Endothelial cell of umbilical vein (primary cell): ENCODE measurements at regions of chr7 and their contacts with region 1.

Region 1: DNA sequence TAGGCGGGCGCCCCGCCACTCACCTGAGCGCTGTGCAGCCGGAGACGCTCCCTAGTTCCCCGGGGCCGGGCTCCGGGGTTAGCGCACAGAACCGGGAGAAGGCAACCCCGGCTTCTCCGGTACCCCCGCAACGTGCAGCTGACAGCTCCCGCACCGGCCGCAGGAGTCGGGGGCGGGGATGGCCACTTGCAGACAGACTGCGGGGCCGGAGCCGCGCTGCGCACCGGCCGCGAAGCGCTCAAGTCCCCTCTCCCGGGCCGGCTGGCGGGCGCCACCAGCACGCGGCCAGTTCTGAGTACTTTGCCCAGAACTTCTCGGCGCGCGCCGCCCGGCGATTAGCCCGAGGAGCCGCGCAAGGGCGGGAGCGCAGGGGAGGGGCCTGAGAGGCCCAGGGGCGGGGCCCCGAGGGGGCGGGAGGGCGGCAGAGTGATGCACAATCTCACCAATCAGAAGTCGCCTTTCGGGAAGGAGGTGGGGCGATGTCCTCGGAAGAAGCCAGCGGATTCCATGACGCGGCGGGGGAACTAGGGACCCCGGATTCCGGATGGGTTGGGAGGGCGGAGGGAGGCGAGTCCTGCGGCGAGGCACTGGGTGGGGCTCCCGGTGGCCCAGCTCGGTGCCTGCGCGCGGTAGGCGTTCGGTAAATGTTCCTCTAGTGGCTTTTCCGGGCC is at the start of gene OSBPL3:
- DNase-seq: peak; percentile 95
- H3K4me3 ChIP-seq: peak within 1 kb of the TSS; percentile 71 to 82 (median 75)
- H3K27ac ChIP-seq: peak within 1 kb of the TSS; percentile 65
- H3K4me1 ChIP-seq: peaks cover 38% of the 10 kb centered on the region
- H3K27me3 ChIP-seq: no peaks in the 10 kb centered on the region
- CTCF ChIP-seq: no peak
- POLR2A ChIP-seq: peak; percentile 58
- total RNA-seq, gene OSBPL3: 27.1 and 31.3 TPM in 2 replicates

Region 2: GRCh38 chr7:24819916-24820689 is 159.9 kb before region 1 on chr7:
- CTCF ChIA-PET with region 1: interaction called, 105 read pairs
- POLR2A ChIA-PET with region 1: no interaction called
- dilution Hi-C with region 1: no loop called
- intact Hi-C with region 1: loop called (anchors 1 kb)
- DNase-seq: peak; percentile 85
- H3K4me3 ChIP-seq: no peak overlapping the region
- H3K27ac ChIP-seq: peak overlapping the region; percentile 86
- H3K4me1 ChIP-seq: peaks cover 15% of the 10 kb centered on the region
- H3K27me3 ChIP-seq: no peaks in the 10 kb centered on the region
- CTCF ChIP-seq: peak; percentile 80 to 83
- POLR2A ChIP-seq: no peak

Region 3: GRCh38 chr7:24842449-24843241 is 137.4 kb before region 1 on chr7:
- CTCF ChIA-PET with region 1: interaction called, 10 read pairs
- POLR2A ChIA-PET with region 1: no interaction called
- dilution Hi-C with region 1: no loop called
- intact Hi-C with region 1: loop called (anchors 5 kb)
- DNase-seq: peak; percentile 85
- H3K4me3 ChIP-seq: peak overlapping the region in 1 of 3 experiments; percentile 24
- H3K27ac ChIP-seq: peak overlapping the region; percentile 89
- H3K4me1 ChIP-seq: peaks cover 32% of the 10 kb centered on the region
- H3K27me3 ChIP-seq: no peaks in the 10 kb centered on the region
- CTCF ChIP-seq: no peak
- POLR2A ChIP-seq: no peak

Region 4: GRCh38 chr7:24882989-24883621 is 96.9 kb before region 1 on chr7:
- CTCF ChIA-PET with region 1: interaction called, 32 read pairs
- POLR2A ChIA-PET with region 1: no interaction called
- dilution Hi-C with region 1: no loop called
- intact Hi-C with region 1: loop called (anchors 2 kb)
- DNase-seq: peak; percentile 67
- H3K4me3 ChIP-seq: no peak overlapping the region
- H3K27ac ChIP-seq: peak overlapping the region; percentile 23
- H3K4me1 ChIP-seq: peaks cover 47% of the 10 kb centered on the region
- H3K27me3 ChIP-seq: no peaks in the 10 kb centered on the region
- CTCF ChIP-seq: no peak
- POLR2A ChIP-seq: no peak

Region 5: DNA sequence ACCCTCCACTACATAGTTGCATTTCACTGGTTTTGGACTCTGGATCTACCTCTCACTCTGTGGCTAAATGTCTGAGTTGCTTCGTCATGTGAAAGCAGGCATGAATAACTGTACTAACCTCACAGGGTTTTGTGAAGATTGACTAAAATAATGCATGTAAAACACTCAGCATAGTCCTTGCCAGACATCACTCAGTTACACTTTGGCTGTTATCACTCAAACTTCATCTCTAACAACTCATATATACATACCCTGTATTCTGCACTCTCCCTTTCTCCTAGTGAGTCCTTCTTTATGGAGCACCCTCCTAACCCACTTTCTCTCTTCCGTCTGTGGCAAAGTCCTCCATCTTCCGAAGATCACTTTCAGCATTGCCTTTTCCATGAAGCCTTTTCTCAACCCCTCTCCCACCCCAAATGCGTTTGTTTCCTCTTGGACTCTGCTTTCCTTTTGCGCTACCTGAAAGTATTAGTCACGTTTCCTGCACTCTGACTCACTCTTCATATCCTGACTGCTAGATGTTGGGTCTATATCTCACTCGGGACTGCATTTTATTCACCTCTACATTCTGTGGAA is 72.6 kb before region 1 on chr7:
- CTCF ChIA-PET with region 1: interaction called, 20 read pairs
- POLR2A ChIA-PET with region 1: no interaction called
- dilution Hi-C with region 1: no loop called
- intact Hi-C with region 1: loop called (anchors 1 kb)
- DNase-seq: peak; percentile 89
- H3K4me3 ChIP-seq: peak overlapping the region in 1 of 3 experiments; percentile 28
- H3K27ac ChIP-seq: peak overlapping the region; percentile 90
- H3K4me1 ChIP-seq: peaks cover 61% of the 10 kb centered on the region
- H3K27me3 ChIP-seq: no peaks in the 10 kb centered on the region
- CTCF ChIP-seq: no peak
- POLR2A ChIP-seq: no peak

Region 6: DNA sequence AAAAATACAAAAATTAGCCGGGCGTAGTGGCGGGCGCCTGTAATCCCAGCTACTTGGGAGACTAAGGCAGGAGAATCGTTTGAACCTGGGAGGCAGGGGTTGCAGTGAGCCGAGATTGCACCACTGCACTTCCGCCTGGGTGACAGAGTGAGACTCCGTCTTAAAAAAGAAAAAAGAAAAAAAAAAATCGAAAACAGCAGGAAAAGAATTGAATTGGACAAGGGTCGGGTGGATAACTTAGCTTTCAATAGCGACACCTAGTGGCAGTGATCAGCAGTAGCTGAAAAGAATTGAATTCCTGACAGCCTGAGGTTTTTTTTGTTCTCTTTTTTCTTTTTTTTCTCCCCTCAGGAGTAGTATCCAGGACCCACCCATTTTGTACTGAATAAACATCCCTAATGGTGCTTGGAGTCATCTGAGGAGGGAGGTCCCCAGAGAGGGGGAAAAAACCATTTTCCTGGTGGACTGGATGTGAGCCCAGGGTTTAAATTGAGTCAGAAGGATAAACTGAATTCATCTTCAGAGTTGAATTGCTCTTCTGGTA is 90.0 kb after region 1 on chr7:
- CTCF ChIA-PET with region 1: interaction called, 53 read pairs
- POLR2A ChIA-PET with region 1: interaction called, 3 read pairs
- dilution Hi-C with region 1: no loop called
- intact Hi-C with region 1: loop called (anchors 1 kb)
- DNase-seq: peak; percentile 70
- H3K4me3 ChIP-seq: no peak overlapping the region
- H3K27ac ChIP-seq: no peak overlapping the region
- H3K4me1 ChIP-seq: no peaks in the 10 kb centered on the region
- H3K27me3 ChIP-seq: peaks cover 0 to 2% of the 10 kb centered on the region in 2 experiments
- CTCF ChIP-seq: peak; percentile 65 to 73
- POLR2A ChIP-seq: no peak